Mammary epithelial cell (primary cell): ENCODE measurements at regions of chrX and their contacts with region 1.

Region 1: DNA sequence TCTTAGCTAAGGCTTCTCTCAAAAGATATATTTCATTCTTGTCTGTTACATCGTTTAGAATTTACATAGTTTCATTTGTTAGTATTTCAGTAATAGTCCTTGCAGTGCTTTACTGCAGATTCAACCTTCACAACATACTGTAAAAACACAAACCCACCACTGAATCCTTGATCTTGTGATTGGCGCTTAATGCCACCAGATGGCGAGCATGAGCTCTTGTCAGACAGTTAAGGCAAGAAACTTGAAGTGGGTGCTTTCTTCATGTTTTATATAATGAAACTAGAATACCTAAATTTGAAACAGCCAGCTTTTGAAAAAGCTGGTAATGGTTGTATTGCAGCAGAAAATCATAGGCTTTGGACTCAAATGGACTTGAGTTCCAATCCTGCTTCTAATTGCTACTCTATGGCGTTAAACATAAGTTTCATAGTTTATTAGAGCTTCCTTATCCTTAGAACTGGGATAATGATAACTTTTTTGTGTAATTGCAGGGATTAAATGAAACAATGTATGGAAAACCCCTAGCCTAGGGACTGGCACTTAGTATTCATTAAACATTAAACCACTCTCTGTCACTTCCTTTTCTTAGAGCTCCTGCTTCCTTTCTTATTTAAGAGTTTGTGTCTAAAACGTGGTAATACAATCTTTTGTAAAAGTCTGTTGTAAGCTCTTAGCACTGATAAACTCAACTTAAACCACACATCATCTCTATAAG is 95.1 kb downstream of the USP9X start:
- DNase-seq: peak; percentile 42
- H3K4me3 ChIP-seq: no peak overlapping the region
- H3K27ac ChIP-seq: no peak overlapping the region
- H3K4me1 ChIP-seq: no peaks in the 10 kb centered on the region
- H3K27me3 ChIP-seq: no peaks in the 10 kb centered on the region
- CTCF ChIP-seq: peak; percentile 85 to 88

Region 2: GRCh38 chrX:41167888-41168287 is 12.5 kb before region 1 on chrX:
- CTCF ChIA-PET with region 1: interaction called, 12 read pairs
- dilution Hi-C with region 1: no loop called
- in situ Hi-C with region 1: no loop called
- intact Hi-C with region 1: no loop called
- DNase-seq: peak; percentile 2
- H3K4me3 ChIP-seq: no peak overlapping the region
- H3K27ac ChIP-seq: no peak overlapping the region
- H3K4me1 ChIP-seq: no peaks in the 10 kb centered on the region
- H3K27me3 ChIP-seq: no peaks in the 10 kb centered on the region
- CTCF ChIP-seq: no peak

Region 3: DNA sequence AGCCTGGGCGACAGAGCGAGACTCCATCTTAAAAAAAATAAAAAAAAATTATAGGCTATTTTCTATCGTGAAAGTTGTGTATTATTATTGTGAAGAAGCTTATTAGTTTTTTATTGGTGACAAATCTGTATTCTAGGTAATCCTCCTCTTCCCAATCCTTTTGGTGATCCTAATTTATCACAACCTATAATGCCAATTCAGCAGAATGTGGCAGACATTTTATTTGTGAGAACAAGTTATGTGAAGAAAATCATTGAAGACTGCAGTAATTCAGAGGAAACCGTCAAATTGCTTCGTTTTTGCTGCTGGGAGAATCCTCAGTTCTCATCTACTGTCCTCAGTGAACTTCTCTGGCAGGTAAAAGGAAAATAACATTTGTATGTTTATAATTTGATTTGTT is 44.3 kb after region 1 on chrX:
- CTCF ChIA-PET with region 1: interaction called, 10 read pairs
- dilution Hi-C with region 1: no loop called
- in situ Hi-C with region 1: no loop called
- intact Hi-C with region 1: no loop called
- DNase-seq: no peak
- H3K4me3 ChIP-seq: no peak overlapping the region
- H3K27ac ChIP-seq: no peak overlapping the region
- H3K4me1 ChIP-seq: no peaks in the 10 kb centered on the region
- H3K27me3 ChIP-seq: no peaks in the 10 kb centered on the region
- CTCF ChIP-seq: no peak